ENCODE measurements at regions of chr14 and their contacts with region 1.

Region 1: GRCh38 chr14:90758028-90758889 is 58.0 kb downstream of the TTC7B start:
- DNase-seq: peak; percentile 88 to 95 (median 93)
- H3K4me3 ChIP-seq: peak overlapping the region; percentile 58 to 69
- H3K4me3 Mint-ChIP-seq: peak overlapping the region; percentile 86 to 94 (median 88)
- H3K27ac ChIP-seq: peak overlapping the region; percentile 55
- H3K27ac Mint-ChIP-seq: peak overlapping the region; percentile 87 to 96 (median 94)
- H3K4me1 ChIP-seq: peaks cover 18% of the 10 kb centered on the region
- H3K4me1 Mint-ChIP-seq: peaks cover 7 to 23% (median 12%) of the 10 kb centered on the region in 4 donors
- H3K27me3 ChIP-seq: no peaks in the 10 kb centered on the region
- H3K27me3 Mint-ChIP-seq: peaks cover 3 to 5% of the 10 kb centered on the region in 2 donors

Region 2: GRCh38 chr14:90301668-90302090 is 456.6 kb before region 1 on chr14:
- CTCF ChIA-PET with region 1: interaction called, 12 read pairs
- POLR2A ChIA-PET with region 1: no interaction called
- intact Hi-C with region 1: no loop called
- DNase-seq: peak in 1 of 5 donors; percentile 18
- H3K4me3 ChIP-seq: no peak overlapping the region
- H3K4me3 Mint-ChIP-seq: no peak overlapping the region
- H3K27ac ChIP-seq: no peak overlapping the region
- H3K27ac Mint-ChIP-seq: peak overlapping the region in 4 of 7 donors; percentile 0 to 84 (median 48)
- H3K4me1 ChIP-seq: no peaks in the 10 kb centered on the region
- H3K4me1 Mint-ChIP-seq: peaks cover 11 to 22% (median 15%) of the 10 kb centered on the region in 4 donors
- H3K27me3 ChIP-seq: no peaks in the 10 kb centered on the region
- H3K27me3 Mint-ChIP-seq: no peaks in the 10 kb centered on the region

Region 3: GRCh38 chr14:90383075-90383730 is 375.1 kb before region 1 on chr14:
- CTCF ChIA-PET with region 1: interaction called, 9 read pairs
- POLR2A ChIA-PET with region 1: interaction called, 56 read pairs
- intact Hi-C with region 1: loop called (anchors 1 kb)
- DNase-seq: peak; percentile 96 to 98 (median 97)
- H3K4me3 ChIP-seq: peak overlapping the region; percentile 86 to 95
- H3K4me3 Mint-ChIP-seq: no peak overlapping the region
- H3K27ac ChIP-seq: peak overlapping the region; percentile 93
- H3K27ac Mint-ChIP-seq: no peak overlapping the region
- H3K4me1 ChIP-seq: peaks cover 31% of the 10 kb centered on the region
- H3K4me1 Mint-ChIP-seq: peaks cover 4 to 18% (median 9%) of the 10 kb centered on the region in 4 donors
- H3K27me3 ChIP-seq: no peaks in the 10 kb centered on the region
- H3K27me3 Mint-ChIP-seq: no peaks in the 10 kb centered on the region

Region 4: GRCh38 chr14:90697577-90698206 is 60.6 kb before region 1 on chr14:
- CTCF ChIA-PET with region 1: interaction called, 14 read pairs
- POLR2A ChIA-PET with region 1: interaction called, 4 read pairs
- intact Hi-C with region 1: loop called (anchors 1 kb)
- DNase-seq: peak; percentile 63 to 71 (median 71)
- H3K4me3 ChIP-seq: no peak overlapping the region
- H3K4me3 Mint-ChIP-seq: peak overlapping the region in 1 of 8 donors; percentile 52
- H3K27ac ChIP-seq: no peak overlapping the region
- H3K27ac Mint-ChIP-seq: no peak overlapping the region
- H3K4me1 ChIP-seq: no peaks in the 10 kb centered on the region
- H3K4me1 Mint-ChIP-seq: peaks cover 0 to 2% (median 0%) of the 10 kb centered on the region in 4 donors
- H3K27me3 ChIP-seq: no peaks in the 10 kb centered on the region
- H3K27me3 Mint-ChIP-seq: peaks cover 0 to 1% of the 10 kb centered on the region in 2 donors

Region 5: DNA sequence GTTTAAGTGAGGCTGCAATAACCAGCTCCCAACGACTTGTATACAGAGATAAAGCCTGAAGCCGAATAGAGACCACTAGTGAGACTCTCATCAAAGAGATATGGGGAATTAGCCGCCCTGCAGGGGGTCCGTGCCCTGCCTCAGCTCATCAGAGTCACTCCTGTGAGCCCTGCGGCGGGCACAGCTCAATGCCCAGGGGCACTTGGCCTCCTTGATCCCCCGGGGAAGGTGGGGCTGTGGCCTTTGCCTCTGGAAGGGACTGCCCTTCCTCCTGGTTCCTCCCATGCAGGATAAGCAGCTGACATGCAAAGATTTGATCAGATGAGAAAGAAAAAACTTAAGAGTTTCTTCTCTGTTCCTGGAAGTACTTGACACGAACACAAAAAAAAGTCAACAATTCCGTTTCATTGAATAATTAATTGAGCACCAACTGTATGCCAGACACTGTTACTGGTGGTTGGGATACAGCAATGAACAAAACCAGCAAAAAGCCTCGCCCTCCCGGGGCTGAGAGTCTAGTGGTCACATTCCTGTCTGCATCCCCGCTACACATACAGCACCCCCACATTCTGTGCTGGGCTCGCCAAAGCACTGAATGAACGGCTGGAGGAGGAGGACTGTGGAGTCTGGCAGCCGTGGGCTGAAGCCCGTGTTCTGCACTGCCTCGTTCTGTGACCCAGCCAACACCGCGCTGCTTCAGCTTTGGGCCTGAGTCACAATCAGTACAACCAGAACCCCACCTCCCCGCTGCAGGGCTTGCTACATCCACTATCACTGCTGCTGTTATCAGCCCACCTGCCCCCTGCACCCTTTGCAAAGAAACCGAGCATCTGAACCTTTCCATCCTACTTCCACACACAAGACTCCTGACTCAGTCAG is 47.6 kb after region 1 on chr14:
- CTCF ChIA-PET with region 1: no interaction called
- POLR2A ChIA-PET with region 1: no interaction called
- intact Hi-C with region 1: no loop called
- DNase-seq: no peak
- H3K4me3 ChIP-seq: no peak overlapping the region
- H3K4me3 Mint-ChIP-seq: no peak overlapping the region
- H3K27ac ChIP-seq: no peak overlapping the region
- H3K27ac Mint-ChIP-seq: no peak overlapping the region
- H3K4me1 ChIP-seq: peaks cover 5% of the 10 kb centered on the region
- H3K4me1 Mint-ChIP-seq: peaks cover 0 to 7% (median 5%) of the 10 kb centered on the region in 4 donors
- H3K27me3 ChIP-seq: no peaks in the 10 kb centered on the region
- H3K27me3 Mint-ChIP-seq: no peaks in the 10 kb centered on the region

Region 6: GRCh38 chr14:90827916-90828610 is 69.8 kb after region 1 on chr14:
- CTCF ChIA-PET with region 1: interaction called, 3 read pairs
- POLR2A ChIA-PET with region 1: interaction called, 5 read pairs
- intact Hi-C with region 1: loop called (anchors 1 kb)
- DNase-seq: peak; percentile 86 to 91 (median 88)
- H3K4me3 ChIP-seq: peak overlapping the region; percentile 55 to 71
- H3K4me3 Mint-ChIP-seq: peak overlapping the region; percentile 79 to 92 (median 84)
- H3K27ac ChIP-seq: peak overlapping the region; percentile 57
- H3K27ac Mint-ChIP-seq: peak overlapping the region; percentile 82 to 96 (median 94)
- H3K4me1 ChIP-seq: peaks cover 20% of the 10 kb centered on the region
- H3K4me1 Mint-ChIP-seq: peaks cover 8 to 28% (median 18%) of the 10 kb centered on the region in 4 donors
- H3K27me3 ChIP-seq: no peaks in the 10 kb centered on the region
- H3K27me3 Mint-ChIP-seq: no peaks in the 10 kb centered on the region

Region 7: DNA sequence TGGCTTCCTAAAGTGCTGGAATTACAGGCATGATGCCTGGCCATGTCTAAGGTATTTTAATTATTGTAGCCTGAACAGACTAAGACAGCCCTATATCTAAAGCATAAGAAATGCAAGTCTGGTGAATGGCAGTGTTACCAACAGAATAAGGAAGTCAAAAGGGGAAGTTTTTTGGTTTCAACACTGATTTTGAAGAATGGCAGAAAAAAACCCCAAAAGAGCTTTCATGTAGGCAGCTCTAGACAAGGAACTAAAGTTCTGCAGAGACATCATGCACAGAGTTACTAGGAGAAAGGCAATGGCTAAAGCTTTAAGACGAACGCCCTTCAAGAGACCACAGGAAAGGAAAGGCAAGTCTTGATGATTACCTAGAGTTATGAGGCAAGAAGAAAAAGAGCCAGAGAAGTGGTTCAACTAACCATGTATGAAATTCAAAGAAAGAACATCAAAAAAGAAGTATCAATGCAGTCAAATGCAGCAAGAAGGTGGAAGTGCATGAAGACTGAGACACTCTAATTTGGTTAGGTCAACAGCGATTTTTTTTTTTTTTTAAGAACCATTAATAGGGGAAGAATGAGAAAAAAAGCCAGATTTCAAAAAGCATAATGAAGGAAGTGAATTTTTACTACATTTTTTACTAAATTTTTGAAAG is 251.4 kb after region 1 on chr14:
- CTCF ChIA-PET with region 1: no interaction called
- POLR2A ChIA-PET with region 1: no interaction called
- intact Hi-C with region 1: no loop called
- DNase-seq: peak in 1 of 5 donors; percentile 13
- H3K4me3 ChIP-seq: no peak overlapping the region
- H3K4me3 Mint-ChIP-seq: peak overlapping the region in 6 of 8 donors; percentile 6 to 62 (median 25)
- H3K27ac ChIP-seq: no peak overlapping the region
- H3K27ac Mint-ChIP-seq: peak overlapping the region in 1 of 7 donors; percentile 1
- H3K4me1 ChIP-seq: peaks cover 33% of the 10 kb centered on the region
- H3K4me1 Mint-ChIP-seq: peaks cover 27 to 51% (median 42%) of the 10 kb centered on the region in 4 donors
- H3K27me3 ChIP-seq: no peaks in the 10 kb centered on the region
- H3K27me3 Mint-ChIP-seq: no peaks in the 10 kb centered on the region